SK-N-SH (cell line): ENCODE measurements at regions of chr5 and their contacts with region 1.

Region 1: GRCh38 chr5:154405078-154405792 is 40.6 kb upstream of the SAP30L start:
- DNase-seq: peak; percentile 92
- H3K4me3 ChIP-seq: peak overlapping the region in 1 of 2 experiments; percentile 24; a peak in 1 of 4 replicates
- H3K27ac ChIP-seq: no peak overlapping the region
- H3K4me1 ChIP-seq: peaks cover 4 to 11% of the 10 kb centered on the region in 2 experiments; a peak in 2 of 4 replicates
- H3K27me3 ChIP-seq: no peaks in the 10 kb centered on the region
- CTCF ChIP-seq: peak; percentile 78
- EP300 ChIP-seq: no peak
- RAD21 ChIP-seq: peak; percentile 97

Region 2: DNA sequence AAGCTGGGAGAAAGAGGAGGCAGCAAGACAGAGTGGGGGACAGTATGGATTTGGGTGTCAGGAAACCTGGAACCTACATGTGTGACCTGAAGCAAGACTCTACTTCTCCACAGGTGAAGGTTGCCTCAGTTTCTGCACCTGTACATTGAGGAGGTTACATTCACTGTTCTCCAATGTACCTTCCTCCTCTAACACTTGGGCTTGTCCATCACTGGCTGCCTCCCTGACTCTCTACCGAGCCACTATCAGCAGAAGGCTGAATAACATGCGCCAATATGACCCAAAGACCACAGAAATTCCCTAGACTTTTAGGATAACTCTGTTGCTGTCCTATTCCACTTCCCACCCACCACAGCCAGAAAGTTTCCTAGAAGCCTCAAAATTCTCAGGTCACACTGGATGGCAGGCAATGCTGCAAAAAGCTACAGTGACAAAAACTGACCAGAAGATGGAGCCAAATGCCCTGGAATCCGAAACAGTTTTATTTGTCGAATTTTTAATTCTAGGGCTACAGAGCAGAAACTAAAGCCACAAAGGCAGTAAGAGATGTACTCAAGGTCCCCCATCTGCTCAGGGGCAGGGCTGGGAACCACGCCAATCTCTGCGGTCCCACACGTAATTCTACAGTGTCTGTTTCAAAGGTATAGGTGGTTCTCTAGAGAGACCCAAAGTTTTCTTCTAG is 431.0 kb before region 1 on chr5:
- CTCF ChIA-PET with region 1: interaction called, 40 read pairs
- POLR2A ChIA-PET with region 1: no interaction called
- DNase-seq: peak; percentile 48
- H3K4me3 ChIP-seq: no peak overlapping the region
- H3K27ac ChIP-seq: no peak overlapping the region
- H3K4me1 ChIP-seq: no peaks in the 10 kb centered on the region
- H3K27me3 ChIP-seq: no peaks in the 10 kb centered on the region
- CTCF ChIP-seq: peak; percentile 84
- EP300 ChIP-seq: no peak
- RAD21 ChIP-seq: peak; percentile 90

Region 3: GRCh38 chr5:154179846-154180710 is 225.2 kb before region 1 on chr5:
- CTCF ChIA-PET with region 1: interaction called, 44 read pairs
- POLR2A ChIA-PET with region 1: no interaction called
- DNase-seq: peak; percentile 64
- H3K4me3 ChIP-seq: no peak overlapping the region; a peak in 1 of 4 replicates
- H3K27ac ChIP-seq: no peak overlapping the region
- H3K4me1 ChIP-seq: no peaks in the 10 kb centered on the region
- H3K27me3 ChIP-seq: no peaks in the 10 kb centered on the region
- CTCF ChIP-seq: peak; percentile 78
- EP300 ChIP-seq: no peak
- RAD21 ChIP-seq: peak; percentile 83

Region 4: DNA sequence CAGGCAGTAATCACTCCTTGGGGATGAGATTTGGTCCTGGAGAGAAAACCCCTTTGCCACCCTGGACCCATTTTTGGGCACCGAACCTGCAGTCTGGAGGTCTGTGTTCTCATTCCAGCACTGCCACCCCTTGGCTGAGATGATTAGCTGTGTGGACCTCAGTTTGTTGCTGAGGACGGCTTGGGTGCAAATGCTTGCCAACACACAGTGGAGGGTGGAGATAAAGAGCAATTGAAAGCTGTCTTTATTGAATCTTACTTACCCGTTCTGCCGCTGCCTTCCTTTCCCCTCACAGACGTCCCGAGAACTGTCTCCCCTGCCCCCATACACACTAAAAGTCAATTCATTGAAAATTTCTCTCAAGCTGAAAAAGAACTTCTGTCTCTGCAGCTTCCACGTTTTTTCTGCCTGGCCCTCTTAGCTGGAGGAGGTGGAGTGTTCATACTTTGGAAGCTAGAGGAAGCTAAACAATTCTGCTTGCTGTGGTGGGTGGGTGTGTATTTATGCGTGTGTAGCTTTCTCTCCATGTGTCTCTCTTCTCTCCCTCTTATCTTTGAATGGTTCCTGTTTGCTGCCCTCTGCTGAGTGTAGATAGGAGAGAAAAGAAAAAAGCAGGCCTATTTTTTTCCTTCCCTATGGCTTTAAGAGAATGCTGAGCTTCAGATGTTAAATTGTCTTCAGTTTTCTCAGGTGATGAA is 208.1 kb before region 1 on chr5:
- CTCF ChIA-PET with region 1: interaction called, 55 read pairs
- POLR2A ChIA-PET with region 1: no interaction called
- DNase-seq: peak; percentile 59
- H3K4me3 ChIP-seq: no peak overlapping the region
- H3K27ac ChIP-seq: peak overlapping the region in 1 of 2 experiments; percentile 1; a peak in 1 of 4 replicates
- H3K4me1 ChIP-seq: peaks cover 24 to 45% of the 10 kb centered on the region in 2 experiments
- H3K27me3 ChIP-seq: no peaks in the 10 kb centered on the region
- CTCF ChIP-seq: peak; percentile 51
- EP300 ChIP-seq: no peak
- RAD21 ChIP-seq: peak; percentile 57

Region 5: GRCh38 chr5:154421868-154422267 is 16.6 kb after region 1 on chr5:
- CTCF ChIA-PET with region 1: interaction called, 15 read pairs
- POLR2A ChIA-PET with region 1: no interaction called
- DNase-seq: peak; percentile 58
- H3K4me3 ChIP-seq: no peak overlapping the region
- H3K27ac ChIP-seq: no peak overlapping the region
- H3K4me1 ChIP-seq: peaks cover 0 to 8% of the 10 kb centered on the region in 2 experiments; a peak in 2 of 4 replicates
- H3K27me3 ChIP-seq: no peaks in the 10 kb centered on the region
- CTCF ChIP-seq: peak; percentile 51
- EP300 ChIP-seq: no peak
- RAD21 ChIP-seq: peak; percentile 75